ENCODE measurements at regions of chr2 and their contacts with region 1.

Region 1: DNA sequence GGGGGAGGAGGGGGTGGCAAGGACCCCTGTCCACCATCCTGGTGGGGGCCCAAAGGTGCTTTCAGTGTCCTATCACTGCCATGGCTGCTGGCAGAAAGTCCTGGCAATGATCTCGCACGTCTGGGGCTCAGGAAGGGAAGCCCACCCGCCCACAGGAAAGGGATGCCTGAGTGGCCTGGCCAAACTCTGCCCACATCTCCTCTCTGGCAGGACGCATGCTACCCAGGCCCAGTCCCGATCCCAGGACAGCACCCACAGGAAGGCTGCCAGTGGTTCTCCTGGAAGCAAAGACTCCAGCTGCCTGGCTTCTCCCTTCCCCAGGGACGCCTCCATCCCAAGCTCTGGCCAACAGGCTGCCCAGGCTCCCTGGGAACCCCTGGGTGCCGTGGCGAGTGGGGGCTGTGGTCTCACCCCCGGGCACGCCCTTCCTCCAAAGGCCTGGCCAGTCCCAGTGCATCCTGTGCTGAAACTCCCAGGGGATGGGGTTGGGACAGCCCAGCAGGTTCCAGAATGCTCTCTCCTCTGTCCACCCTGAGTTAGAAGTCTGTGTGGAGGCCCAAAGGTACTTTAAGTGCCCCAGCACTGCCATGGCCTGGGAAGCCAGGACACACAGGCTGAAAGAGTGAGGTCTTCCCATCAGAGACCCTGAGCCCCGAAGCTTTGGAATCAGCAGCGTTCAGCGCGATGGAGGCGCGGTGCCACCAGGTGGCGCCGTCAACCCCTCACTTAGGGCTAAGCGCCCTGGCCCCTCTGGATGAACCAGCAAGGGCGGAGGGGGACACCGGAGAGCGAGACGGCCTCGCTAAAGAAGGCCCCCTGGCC is 29.8 kb upstream of the TAF1B start:
- DNase-seq: peak; percentile 61
- H3K4me3 ChIP-seq: no peak overlapping the region
- H3K27ac ChIP-seq: no peak overlapping the region
- H3K4me1 ChIP-seq: peaks cover 6% of the 10 kb centered on the region
- H3K27me3 ChIP-seq: no peaks in the 10 kb centered on the region
- CTCF ChIP-seq: peak; percentile 96 to 97
- POLR2A ChIP-seq: no peak

Region 2: DNA sequence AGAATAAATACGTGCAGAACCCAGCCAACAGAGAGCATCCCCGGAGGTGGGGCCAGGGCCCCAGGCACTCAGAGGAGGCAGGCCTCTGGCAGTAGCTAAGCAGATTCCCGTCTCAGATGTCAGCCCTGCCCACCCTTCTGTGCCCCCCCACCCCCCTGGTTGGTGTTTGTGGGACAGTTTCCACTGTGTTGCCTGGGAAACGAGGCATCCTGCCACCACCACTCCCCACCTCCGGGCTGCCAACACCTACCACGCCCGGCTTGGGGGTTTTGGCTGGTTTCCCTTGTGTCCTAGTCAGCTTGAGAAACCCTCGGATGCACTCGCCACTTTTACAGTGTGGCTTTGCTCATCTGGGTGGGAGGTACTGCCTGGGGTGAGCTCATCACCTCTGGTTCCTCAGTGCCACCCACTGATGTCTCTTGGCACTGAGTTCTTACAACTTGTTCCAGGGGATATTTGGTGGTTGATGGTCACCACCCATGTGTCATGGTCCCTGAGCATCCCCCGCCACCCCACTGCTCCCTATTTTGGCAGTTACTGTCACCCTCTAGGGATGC is 110.4 kb before region 1 on chr2:
- CTCF ChIA-PET with region 1: no interaction called
- POLR2A ChIA-PET with region 1: no interaction called
- dilution Hi-C with region 1: no loop called
- intact Hi-C with region 1: no loop called
- DNase-seq: no peak
- H3K4me3 ChIP-seq: no peak overlapping the region
- H3K27ac ChIP-seq: no peak overlapping the region
- H3K4me1 ChIP-seq: peaks cover 7% of the 10 kb centered on the region
- H3K27me3 ChIP-seq: peaks cover 0 to 3% of the 10 kb centered on the region in 2 experiments
- CTCF ChIP-seq: no peak
- POLR2A ChIP-seq: no peak

Region 3: DNA sequence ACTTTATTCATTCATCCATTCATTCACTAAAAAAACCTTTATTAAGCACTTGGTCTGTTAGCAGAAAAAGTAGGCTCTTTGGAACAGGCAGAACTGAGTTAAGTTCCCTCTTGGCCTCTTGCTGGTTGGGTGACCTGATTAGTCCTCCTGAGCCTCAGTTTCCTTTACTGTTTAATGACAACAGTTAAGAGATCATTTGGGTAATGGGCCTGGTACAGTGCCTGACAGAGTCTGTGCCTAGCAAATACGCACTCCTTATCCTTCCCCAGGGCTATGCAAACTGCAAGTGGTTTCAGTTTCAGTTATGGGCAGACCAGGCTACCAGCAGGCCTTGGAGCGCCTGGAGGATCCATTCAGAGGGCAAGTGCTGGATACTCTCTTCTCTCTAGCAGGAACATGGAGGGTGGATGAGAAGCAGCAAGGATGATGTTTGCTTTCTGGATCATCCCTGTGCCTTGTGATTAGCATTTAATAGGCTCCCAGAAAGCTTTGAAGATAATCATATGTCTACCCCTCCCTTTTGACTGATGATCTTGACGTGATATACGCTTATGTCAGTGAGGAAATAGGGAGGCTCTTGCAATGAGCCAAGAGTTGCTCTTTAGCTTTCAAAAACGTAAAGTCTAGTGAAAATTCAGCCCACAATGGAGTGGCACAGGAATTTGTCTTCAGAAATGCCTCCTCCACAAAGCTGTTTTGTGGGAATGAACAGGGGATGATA is 17.3 kb after region 1 on chr2:
- CTCF ChIA-PET with region 1: interaction called, 27 read pairs
- POLR2A ChIA-PET with region 1: no interaction called
- dilution Hi-C with region 1: no loop called
- intact Hi-C with region 1: no loop called
- DNase-seq: no peak
- H3K4me3 ChIP-seq: no peak overlapping the region
- H3K27ac ChIP-seq: no peak overlapping the region
- H3K4me1 ChIP-seq: no peaks in the 10 kb centered on the region
- H3K27me3 ChIP-seq: peaks cover 11 to 15% of the 10 kb centered on the region in 2 experiments
- CTCF ChIP-seq: no peak
- POLR2A ChIP-seq: no peak

Region 4: GRCh38 chr2:9867881-9868280 is 54.4 kb after region 1 on chr2:
- CTCF ChIA-PET with region 1: interaction called, 10 read pairs
- POLR2A ChIA-PET with region 1: no interaction called
- dilution Hi-C with region 1: no loop called
- intact Hi-C with region 1: no loop called
- DNase-seq: no peak
- H3K4me3 ChIP-seq: no peak overlapping the region
- H3K27ac ChIP-seq: no peak overlapping the region
- H3K4me1 ChIP-seq: no peaks in the 10 kb centered on the region
- H3K27me3 ChIP-seq: no peaks in the 10 kb centered on the region
- CTCF ChIP-seq: no peak
- POLR2A ChIP-seq: no peak

Region 5: DNA sequence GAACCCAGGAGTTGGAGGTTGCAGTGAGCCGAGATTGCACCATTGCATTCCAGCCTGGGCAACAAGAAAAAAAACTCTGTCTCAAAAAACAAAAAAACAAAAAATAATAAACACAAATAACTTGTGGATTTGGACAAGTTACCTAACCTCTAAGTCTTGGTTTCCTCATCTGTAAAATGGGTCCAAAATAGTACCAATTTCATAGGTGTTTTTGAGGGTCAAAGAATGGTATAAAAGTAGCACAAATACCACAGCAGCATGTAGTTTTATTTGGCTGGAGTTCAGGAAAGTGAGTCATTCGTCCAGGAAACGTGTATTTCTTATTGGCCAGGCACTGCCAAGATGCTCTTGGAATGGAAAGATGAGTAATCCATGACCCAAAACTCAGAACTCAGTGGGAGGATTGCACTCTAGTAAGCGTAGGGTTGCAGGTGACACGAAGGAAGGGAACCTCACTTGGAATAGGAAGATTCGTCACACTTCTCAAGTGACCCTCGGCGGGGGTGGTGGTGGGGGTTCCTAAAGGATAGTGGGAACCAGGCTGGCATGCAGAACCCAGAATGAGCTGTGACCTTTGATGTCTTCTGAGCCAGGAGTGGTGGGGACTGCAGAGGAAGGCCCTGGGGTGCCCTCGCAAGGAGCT is 162.4 kb after region 1 on chr2:
- CTCF ChIA-PET with region 1: interaction called, 17 read pairs
- POLR2A ChIA-PET with region 1: no interaction called
- dilution Hi-C with region 1: loop called (anchors 25 kb)
- intact Hi-C with region 1: no loop called
- DNase-seq: peak; percentile 97
- H3K4me3 ChIP-seq: no peak overlapping the region
- H3K27ac ChIP-seq: peak overlapping the region; percentile 2
- H3K4me1 ChIP-seq: peaks cover 37% of the 10 kb centered on the region
- H3K27me3 ChIP-seq: no peaks in the 10 kb centered on the region
- CTCF ChIP-seq: no peak
- POLR2A ChIP-seq: no peak

Region 6: DNA sequence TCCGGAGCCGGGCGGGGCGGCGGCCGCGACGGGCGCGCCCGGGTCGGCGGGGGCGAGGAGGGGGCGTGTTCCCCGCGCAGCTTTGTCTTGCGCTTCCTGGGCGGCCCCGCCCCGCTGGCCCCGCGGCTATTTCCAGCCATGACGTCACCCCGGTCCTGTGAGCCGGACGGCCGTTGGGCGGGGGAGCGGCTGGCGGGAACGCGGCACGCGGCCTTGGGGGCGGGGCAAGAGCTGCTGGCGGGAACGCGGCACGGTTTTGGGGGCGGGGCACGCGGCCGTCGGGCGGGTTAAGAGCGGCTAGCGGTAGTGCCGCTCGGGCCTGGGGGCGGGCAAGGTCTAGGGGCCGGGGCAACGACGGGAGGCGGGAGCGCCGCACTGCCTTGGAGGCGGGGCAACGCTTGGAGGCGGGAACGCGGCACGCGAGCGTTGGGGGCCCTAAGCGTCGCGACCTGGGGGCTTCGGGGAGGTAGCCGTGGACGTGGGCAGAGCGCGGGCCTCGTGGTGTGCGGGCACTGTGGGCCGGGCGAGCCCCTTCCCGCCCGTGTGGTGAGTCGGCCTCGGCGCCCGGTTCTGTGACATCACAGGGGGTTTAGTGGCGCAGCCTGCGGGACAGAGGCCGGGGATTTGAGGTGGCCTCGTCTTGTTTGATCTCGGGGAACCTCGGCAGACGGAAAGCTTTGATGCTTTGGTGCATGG is 230.5 kb after region 1 on chr2:
- CTCF ChIA-PET with region 1: interaction called, 161 read pairs
- POLR2A ChIA-PET with region 1: interaction called, 4 read pairs
- dilution Hi-C with region 1: loop called (anchors 10 kb)
- intact Hi-C with region 1: loop called (anchors 1 kb)
- DNase-seq: peak; percentile 92
- H3K4me3 ChIP-seq: peak overlapping the region in 2 of 3 experiments; percentile 31 to 75
- H3K27ac ChIP-seq: peak overlapping the region; percentile 70
- H3K4me1 ChIP-seq: peaks cover 4% of the 10 kb centered on the region
- H3K27me3 ChIP-seq: no peaks in the 10 kb centered on the region
- CTCF ChIP-seq: no peak
- POLR2A ChIP-seq: no peak

Region 7: DNA sequence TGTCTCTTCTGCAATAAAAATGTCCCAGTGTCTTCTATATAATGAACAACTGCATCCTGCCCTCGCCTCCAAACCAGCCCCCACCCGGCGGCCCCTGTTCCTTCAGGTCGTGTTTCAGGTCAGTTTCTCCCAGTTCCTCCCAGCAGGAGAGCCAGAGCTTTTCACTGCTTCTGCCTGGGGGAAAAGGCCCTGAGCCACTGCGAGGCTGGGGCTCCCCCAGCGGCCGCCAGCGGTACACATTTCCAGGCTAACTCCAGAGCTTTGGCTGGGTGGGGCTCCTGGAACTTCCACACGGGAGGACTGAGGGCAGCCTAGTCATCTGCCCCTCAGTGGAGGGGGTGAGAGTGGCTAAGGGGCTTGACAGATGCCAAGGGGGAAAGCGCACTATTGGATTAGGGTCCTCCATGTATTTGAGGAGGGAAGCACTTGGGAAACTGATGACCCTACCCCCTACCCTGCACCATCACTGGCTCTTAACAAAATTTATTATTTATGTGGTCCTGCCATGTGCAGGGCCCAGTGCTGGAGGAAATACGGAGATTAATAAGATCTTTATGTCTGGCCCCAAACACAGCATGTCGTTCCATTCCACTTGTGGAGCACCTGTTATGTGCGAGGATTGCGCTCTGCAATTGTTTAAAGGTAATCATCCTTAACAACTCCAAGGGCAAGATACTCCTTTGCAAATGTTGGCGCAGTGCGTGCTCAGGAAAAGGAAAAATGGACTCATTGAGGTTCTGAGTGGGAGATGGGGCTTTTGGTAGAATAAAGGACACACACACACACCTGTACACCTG is 284.0 kb after region 1 on chr2:
- CTCF ChIA-PET with region 1: interaction called, 48 read pairs
- POLR2A ChIA-PET with region 1: no interaction called
- dilution Hi-C with region 1: no loop called
- intact Hi-C with region 1: loop called (anchors 5 kb)
- DNase-seq: peak; percentile 54
- H3K4me3 ChIP-seq: no peak overlapping the region
- H3K27ac ChIP-seq: no peak overlapping the region
- H3K4me1 ChIP-seq: no peaks in the 10 kb centered on the region
- H3K27me3 ChIP-seq: peaks cover 0 to 1% of the 10 kb centered on the region in 2 experiments
- CTCF ChIP-seq: peak; percentile 87 to 95
- POLR2A ChIP-seq: no peak

Measured in endothelial cell of umbilical vein (primary cell).